HCT116 (cell line): ENCODE measurements at regions of chr5 and their contacts with region 1.

Region 1: DNA sequence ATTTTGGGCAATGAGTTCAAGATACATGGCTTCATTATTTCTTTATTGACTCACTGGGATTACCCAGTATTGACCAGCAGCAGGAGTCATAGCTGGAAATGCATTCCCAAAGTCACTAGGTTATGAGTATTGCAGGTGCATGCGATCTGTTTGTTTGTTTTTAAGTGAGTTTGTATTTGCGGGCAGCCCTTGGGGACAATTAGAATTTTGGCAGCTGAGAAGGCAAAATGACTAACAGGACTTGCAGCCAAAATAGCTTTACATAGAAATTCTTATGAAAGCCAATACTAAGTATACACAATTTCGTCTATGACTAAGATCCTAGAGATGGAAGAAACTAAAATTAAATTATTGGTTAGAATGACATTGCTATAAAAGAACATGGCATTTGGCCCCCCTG is 18.1 kb upstream of the RGMB start:
- DNase-seq: no peak
- ATAC-seq: no peak
- H3K4me3 ChIP-seq: no peak overlapping the region
- H3K27ac ChIP-seq: no peak overlapping the region
- H3K4me1 ChIP-seq: no peaks in the 10 kb centered on the region
- H3K27me3 ChIP-seq: no peaks in the 10 kb centered on the region
- CTCF ChIP-seq: no peak
- POLR2A ChIP-seq: no peak
- RAD21 ChIP-seq: no peak

Region 2: DNA sequence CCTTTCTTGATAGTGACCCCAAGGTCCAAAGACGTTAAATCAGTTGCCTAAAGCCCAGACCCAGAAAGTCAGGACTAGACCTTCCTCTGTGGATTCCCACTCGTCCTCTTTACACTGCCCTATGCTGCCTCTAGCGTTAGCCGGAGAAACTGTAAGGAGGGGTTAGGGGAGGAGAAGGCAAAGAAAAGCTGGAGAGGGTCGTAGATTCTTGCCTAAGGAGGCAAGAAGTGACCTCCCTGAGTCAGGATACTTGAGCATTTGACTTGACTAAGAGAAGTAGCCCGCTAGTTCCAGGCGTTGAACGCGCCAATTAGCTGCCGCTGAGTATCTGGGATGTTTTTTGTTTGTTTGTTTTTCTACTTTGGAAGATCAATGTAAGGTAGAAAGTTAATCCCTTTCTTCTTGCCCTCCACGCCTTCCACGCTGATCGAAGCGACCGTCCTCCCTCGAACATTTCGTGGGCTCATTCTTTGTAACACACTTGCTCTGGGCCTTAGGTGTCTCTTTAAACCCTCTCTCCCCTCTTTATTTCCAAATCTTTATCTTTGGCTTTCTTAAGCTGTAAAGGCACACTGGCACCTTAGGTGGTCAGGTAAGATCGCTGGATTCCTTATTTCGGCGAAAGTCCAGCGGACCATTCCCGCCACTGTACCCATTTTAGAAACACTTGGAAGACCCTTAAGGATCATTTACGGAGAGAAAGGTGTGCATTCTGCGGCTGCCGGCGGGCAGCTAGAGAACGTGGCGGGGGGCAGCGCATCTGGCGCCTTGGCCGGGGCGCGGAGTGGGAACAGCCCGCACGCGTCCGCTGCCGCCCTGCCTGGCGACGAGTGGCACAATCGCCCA is 13.0 kb after region 1 on chr5:
- CTCF ChIA-PET with region 1: interaction called, 15 read pairs
- POLR2A ChIA-PET with region 1: interaction called, 3 read pairs
- RAD21 ChIA-PET with region 1: no interaction called
- intact Hi-C with region 1: no loop called
- DNase-seq: no peak
- ATAC-seq: peak; percentile 67
- H3K4me3 ChIP-seq: peak overlapping the region; percentile 59 to 63
- H3K27ac ChIP-seq: peak overlapping the region; percentile 12; the same call in 1 of the 2 replicates
- H3K4me1 ChIP-seq: peaks cover 13 to 48% of the 10 kb centered on the region in 2 experiments
- H3K27me3 ChIP-seq: peaks cover 6% of the 10 kb centered on the region; the same call in 1 of the 2 replicates
- CTCF ChIP-seq: peak in 2 of 3 experiments; percentile 85 to 98; a peak in 4 of 6 replicates
- POLR2A ChIP-seq: no peak
- RAD21 ChIP-seq: no peak

Region 3: GRCh38 chr5:98846518-98846917 is 91.1 kb after region 1 on chr5:
- CTCF ChIA-PET with region 1: no interaction called
- POLR2A ChIA-PET with region 1: no interaction called
- RAD21 ChIA-PET with region 1: no interaction called
- intact Hi-C with region 1: no loop called
- DNase-seq: no peak
- ATAC-seq: no peak
- H3K4me3 ChIP-seq: no peak overlapping the region
- H3K27ac ChIP-seq: no peak overlapping the region
- H3K4me1 ChIP-seq: no peaks in the 10 kb centered on the region
- H3K27me3 ChIP-seq: no peaks in the 10 kb centered on the region
- CTCF ChIP-seq: no peak
- POLR2A ChIP-seq: no peak
- RAD21 ChIP-seq: no peak